K562 (cell line): ENCODE measurements at regions of chr2 and their contacts with region 1.

Region 1: DNA sequence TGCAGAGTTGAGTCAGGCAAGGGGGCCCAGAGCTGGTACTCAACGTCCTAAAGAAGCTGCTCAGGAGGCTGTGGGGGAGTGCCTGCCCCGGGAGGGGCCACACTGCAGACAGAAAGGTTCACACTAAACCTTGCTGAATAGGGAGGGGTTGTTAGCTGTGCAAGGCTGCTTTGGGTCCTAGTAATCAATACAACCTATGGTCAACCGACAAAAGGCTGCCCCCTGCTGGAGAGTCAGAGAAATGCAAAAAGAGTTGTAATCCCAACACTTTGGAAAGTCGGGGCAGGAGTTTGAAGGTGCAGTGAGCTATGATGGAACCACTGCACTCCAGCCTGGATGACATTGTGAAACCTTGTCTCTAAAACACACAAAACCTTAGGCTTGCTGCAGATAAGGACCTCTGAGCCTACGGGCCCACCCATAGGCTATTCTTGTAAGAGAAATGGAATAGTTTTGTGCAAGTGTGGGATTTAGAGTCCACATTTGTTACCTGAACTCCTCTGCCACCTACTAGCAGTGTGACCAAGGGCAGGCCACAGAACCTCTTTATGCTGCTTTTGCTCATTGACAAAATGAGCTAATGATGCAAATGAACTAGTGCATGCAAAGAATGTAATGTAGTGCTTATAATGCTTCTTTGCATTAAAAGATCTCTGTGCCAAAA is 81.5 kb downstream of the PRPF40A start:
- DNase-seq: peak; percentile 73 to 84 (median 78)
- ATAC-seq: peak; percentile 84
- H3K4me3 ChIP-seq: no peak overlapping the region
- H3K27ac ChIP-seq: no peak overlapping the region
- H3K4me1 ChIP-seq: no peaks in the 10 kb centered on the region
- H3K27me3 ChIP-seq: peaks cover 10 to 18% of the 10 kb centered on the region in 2 experiments; a peak in 3 of 5 replicates
- CTCF ChIP-seq: peak; percentile 74 to 85 (median 84)
- EP300 ChIP-seq: no peak
- POLR2A ChIP-seq: no peak
- RAD21 ChIP-seq: peak; percentile 82 to 89

Region 2: DNA sequence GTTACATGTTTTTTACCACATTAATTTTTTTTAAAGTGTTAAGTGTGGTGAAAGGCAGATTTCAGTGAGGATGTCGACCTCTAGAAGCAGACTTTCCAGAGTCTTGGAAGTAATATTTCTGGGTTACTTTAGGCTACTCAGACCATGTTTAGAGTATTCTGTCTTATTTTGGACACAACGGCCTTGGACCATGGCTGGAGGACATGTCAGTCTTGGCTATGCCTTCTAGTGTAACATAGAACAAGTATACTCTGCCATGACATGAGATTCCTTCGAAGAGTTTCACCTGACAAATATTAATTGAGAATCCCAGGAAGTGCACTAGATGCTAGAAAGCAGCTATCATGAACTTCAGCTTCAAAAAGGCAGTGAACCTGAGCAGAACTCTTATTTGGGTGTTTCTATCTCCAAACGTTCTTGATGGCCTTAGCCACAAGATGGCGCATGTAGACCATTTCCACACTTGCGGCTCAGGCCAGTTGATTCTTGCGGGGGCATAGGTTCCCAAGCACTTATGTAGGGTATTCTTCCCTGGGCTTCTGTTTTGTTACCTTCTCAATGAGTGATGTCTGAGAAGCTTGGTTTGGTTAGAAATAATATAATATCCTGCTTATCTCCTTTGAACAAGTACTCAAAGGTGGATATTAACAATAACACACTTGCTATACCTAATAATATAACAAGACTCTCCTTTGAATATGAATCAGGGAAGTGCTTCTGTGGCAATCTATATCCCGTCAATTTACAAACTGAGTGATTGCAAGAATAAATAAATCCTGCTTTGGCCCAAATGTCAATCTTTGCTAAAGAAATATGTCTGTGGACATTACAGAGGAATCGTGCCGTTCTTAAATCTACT is 598.9 kb before region 1 on chr2:
- CTCF ChIA-PET with region 1: interaction called, 10 read pairs
- POLR2A ChIA-PET with region 1: no interaction called
- in situ Hi-C with region 1: no loop called
- intact Hi-C with region 1: loop called (anchors 2 kb)
- DNase-seq: peak; percentile 58 to 84 (median 66)
- ATAC-seq: peak; percentile 93
- H3K4me3 ChIP-seq: no peak overlapping the region
- H3K27ac ChIP-seq: no peak overlapping the region
- H3K4me1 ChIP-seq: no peaks in the 10 kb centered on the region
- H3K27me3 ChIP-seq: peaks cover 13 to 41% of the 10 kb centered on the region in 2 experiments; a peak in 4 of 5 replicates
- CTCF ChIP-seq: peak; percentile 83 to 93 (median 86)
- EP300 ChIP-seq: no peak
- POLR2A ChIP-seq: no peak
- RAD21 ChIP-seq: peak; percentile 97

Region 3: GRCh38 chr2:152126664-152127063 is 509.1 kb before region 1 on chr2:
- CTCF ChIA-PET with region 1: no interaction called
- POLR2A ChIA-PET with region 1: no interaction called
- in situ Hi-C with region 1: no loop called
- intact Hi-C with region 1: no loop called
- DNase-seq: peak in 1 of 4 experiments; percentile 23
- ATAC-seq: peak; percentile 82
- H3K4me3 ChIP-seq: no peak overlapping the region
- H3K27ac ChIP-seq: no peak overlapping the region
- H3K4me1 ChIP-seq: no peaks in the 10 kb centered on the region
- H3K27me3 ChIP-seq: no peaks in the 10 kb centered on the region
- CTCF ChIP-seq: no peak
- EP300 ChIP-seq: no peak
- POLR2A ChIP-seq: no peak
- RAD21 ChIP-seq: no peak

Region 4: GRCh38 chr2:152781175-152781574 is 145.4 kb after region 1 on chr2:
- CTCF ChIA-PET with region 1: no interaction called
- POLR2A ChIA-PET with region 1: no interaction called
- in situ Hi-C with region 1: no loop called
- intact Hi-C with region 1: no loop called
- DNase-seq: no peak
- ATAC-seq: no peak
- H3K4me3 ChIP-seq: no peak overlapping the region
- H3K27ac ChIP-seq: no peak overlapping the region
- H3K4me1 ChIP-seq: no peaks in the 10 kb centered on the region
- H3K27me3 ChIP-seq: no peaks in the 10 kb centered on the region
- CTCF ChIP-seq: no peak
- EP300 ChIP-seq: no peak
- POLR2A ChIP-seq: no peak
- RAD21 ChIP-seq: no peak